PC-9 (cell line): ENCODE measurements at regions of chr20 and their contacts with region 1.

Region 1: GRCh38 chr20:49078296-49078695 is 32.2 kb downstream of the CSE1L start:
- DNase-seq: no peak
- H3K4me3 ChIP-seq: no peak overlapping the region
- H3K27ac ChIP-seq: no peak overlapping the region
- H3K4me1 ChIP-seq: no peaks in the 10 kb centered on the region
- H3K27me3 ChIP-seq: no peaks in the 10 kb centered on the region
- CTCF ChIP-seq: no peak

Region 2: DNA sequence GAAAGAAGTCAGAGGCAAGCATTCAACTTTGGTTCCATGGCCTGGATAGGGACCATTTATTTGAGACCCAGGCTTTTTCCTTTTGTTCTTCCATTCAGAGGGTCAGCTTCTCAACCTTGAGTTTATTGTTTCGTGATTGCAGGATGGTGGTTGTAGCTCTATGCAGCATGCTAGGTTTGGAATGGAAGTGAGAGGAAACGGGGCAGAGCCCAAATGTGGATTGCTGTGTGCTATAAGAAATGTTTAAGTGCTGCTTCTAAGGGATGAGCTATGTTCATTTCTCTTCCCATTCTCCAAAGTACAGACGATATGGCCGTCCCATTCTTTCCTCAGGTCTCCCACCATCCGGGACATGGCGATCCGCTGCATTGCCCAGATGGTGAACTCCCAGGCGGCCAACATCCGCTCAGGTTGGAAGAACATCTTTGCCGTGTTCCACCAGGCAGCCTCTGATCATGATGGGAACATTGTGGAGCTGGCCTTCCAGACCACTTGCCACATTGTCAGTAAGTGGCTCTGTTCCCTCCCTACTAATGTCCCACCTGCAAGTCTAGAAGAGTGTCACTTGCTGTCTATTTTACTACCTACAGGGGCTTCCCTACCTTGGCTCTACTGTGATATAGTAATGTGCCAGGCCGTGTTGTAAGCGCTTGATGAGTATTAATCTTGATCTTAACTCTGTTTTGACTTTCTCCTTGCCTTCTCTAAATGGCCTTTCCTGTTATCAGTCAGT is 68.2 kb before region 1 on chr20:
- CTCF ChIA-PET with region 1: no interaction called
- POLR2A ChIA-PET with region 1: no interaction called
- intact Hi-C with region 1: loop called (anchors 10 kb)
- DNase-seq: no peak
- H3K4me3 ChIP-seq: no peak overlapping the region
- H3K27ac ChIP-seq: no peak overlapping the region
- H3K4me1 ChIP-seq: no peaks in the 10 kb centered on the region
- H3K27me3 ChIP-seq: no peaks in the 10 kb centered on the region
- CTCF ChIP-seq: no peak

Region 3: DNA sequence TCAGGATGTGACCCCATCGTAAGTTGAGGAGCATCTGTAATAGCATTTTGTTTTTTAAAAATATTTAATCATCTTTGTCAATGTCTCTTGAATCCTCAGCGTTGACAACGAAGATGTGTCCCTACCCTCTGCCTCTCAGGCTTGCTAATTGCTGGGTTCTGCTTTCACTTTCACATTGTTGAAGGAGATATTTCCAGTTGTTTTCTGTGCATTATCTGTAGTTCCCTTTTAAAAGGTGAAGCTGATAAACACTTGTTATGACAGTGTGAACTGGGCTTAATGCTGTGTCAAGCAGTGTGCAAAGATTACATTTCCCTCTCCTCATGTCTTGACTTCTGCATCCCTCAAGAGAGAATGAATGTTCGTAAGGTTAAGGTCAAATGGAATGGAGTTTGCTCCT is 22.7 kb after region 1 on chr20:
- CTCF ChIA-PET with region 1: no interaction called
- POLR2A ChIA-PET with region 1: no interaction called
- intact Hi-C with region 1: no loop called
- DNase-seq: no peak
- H3K4me3 ChIP-seq: no peak overlapping the region
- H3K27ac ChIP-seq: no peak overlapping the region
- H3K4me1 ChIP-seq: no peaks in the 10 kb centered on the region
- H3K27me3 ChIP-seq: no peaks in the 10 kb centered on the region
- CTCF ChIP-seq: no peak

Region 4: GRCh38 chr20:49171909-49172308 is 93.6 kb after region 1 on chr20:
- CTCF ChIA-PET with region 1: no interaction called
- POLR2A ChIA-PET with region 1: no interaction called
- intact Hi-C with region 1: no loop called
- DNase-seq: no peak
- H3K4me3 ChIP-seq: no peak overlapping the region
- H3K27ac ChIP-seq: no peak overlapping the region
- H3K4me1 ChIP-seq: no peaks in the 10 kb centered on the region
- H3K27me3 ChIP-seq: no peaks in the 10 kb centered on the region
- CTCF ChIP-seq: no peak

Region 5: GRCh38 chr20:50012282-50013263 is 934.3 kb after region 1 on chr20:
- CTCF ChIA-PET with region 1: no interaction called
- POLR2A ChIA-PET with region 1: no interaction called
- intact Hi-C with region 1: no loop called
- DNase-seq: no peak
- H3K4me3 ChIP-seq: no peak overlapping the region
- H3K27ac ChIP-seq: no peak overlapping the region
- H3K4me1 ChIP-seq: no peaks in the 10 kb centered on the region
- H3K27me3 ChIP-seq: no peaks in the 10 kb centered on the region
- CTCF ChIP-seq: no peak